ENCODE measurements at regions of chr14 and their contacts with region 1.

Region 1: GRCh38 chr14:92612988-92613658 is 99.5 kb downstream of the RIN3 start:
- DNase-seq: peak; percentile 55 to 83 (median 69)
- ATAC-seq: peak; percentile 35
- H3K4me3 ChIP-seq: no peak overlapping the region
- H3K4me3 Mint-ChIP-seq: peak overlapping the region; percentile 4
- H3K27ac ChIP-seq: no peak overlapping the region
- H3K27ac Mint-ChIP-seq: peak overlapping the region; percentile 67
- H3K4me1 ChIP-seq: peaks cover 56% of the 10 kb centered on the region
- H3K4me1 Mint-ChIP-seq: peaks cover 76% of the 10 kb centered on the region
- H3K27me3 ChIP-seq: no peaks in the 10 kb centered on the region
- H3K27me3 Mint-ChIP-seq: no peaks in the 10 kb centered on the region
- CTCF ChIP-seq: peak; percentile 96

Region 2: DNA sequence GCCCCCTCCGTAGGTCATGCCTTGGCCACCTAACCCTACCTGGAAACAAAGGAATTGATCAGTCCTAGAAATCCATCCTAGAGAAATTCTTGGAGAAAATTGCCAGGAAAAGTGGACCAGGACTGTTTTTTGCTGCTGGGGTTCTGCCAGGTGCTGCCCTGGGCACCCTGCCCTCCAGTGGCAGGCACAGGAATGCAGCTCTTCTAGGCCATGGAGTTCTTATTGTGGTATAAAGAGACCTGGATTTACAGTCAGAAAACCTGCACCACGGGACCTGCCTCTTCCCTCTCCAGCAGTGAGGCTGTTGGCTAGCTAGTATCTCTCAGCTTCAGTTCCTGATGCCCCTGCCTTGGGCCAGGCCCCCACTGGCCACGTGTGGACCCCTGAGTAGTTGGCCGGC is 230.4 kb before region 1 on chr14:
- CTCF ChIA-PET with region 1: no interaction called
- POLR2A ChIA-PET with region 1: no interaction called
- intact Hi-C with region 1: no loop called
- DNase-seq: no peak
- ATAC-seq: no peak
- H3K4me3 ChIP-seq: no peak overlapping the region
- H3K4me3 Mint-ChIP-seq: no peak overlapping the region
- H3K27ac ChIP-seq: no peak overlapping the region
- H3K27ac Mint-ChIP-seq: no peak overlapping the region
- H3K4me1 ChIP-seq: no peaks in the 10 kb centered on the region
- H3K4me1 Mint-ChIP-seq: no peaks in the 10 kb centered on the region
- H3K27me3 ChIP-seq: no peaks in the 10 kb centered on the region
- H3K27me3 Mint-ChIP-seq: no peaks in the 10 kb centered on the region
- CTCF ChIP-seq: no peak

Region 3: GRCh38 chr14:92659765-92660561 is 46.8 kb after region 1 on chr14:
- CTCF ChIA-PET with region 1: interaction called, 19 read pairs
- POLR2A ChIA-PET with region 1: interaction called, 154 read pairs
- intact Hi-C with region 1: no loop called
- DNase-seq: peak in 3 of 14 experiments; percentile 33 to 60 (median 53)
- ATAC-seq: no peak
- H3K4me3 ChIP-seq: no peak overlapping the region
- H3K4me3 Mint-ChIP-seq: peak overlapping the region; percentile 55
- H3K27ac ChIP-seq: peak overlapping the region; percentile 24 to 59
- H3K27ac Mint-ChIP-seq: peak overlapping the region; percentile 97
- H3K4me1 ChIP-seq: peaks cover 86% of the 10 kb centered on the region
- H3K4me1 Mint-ChIP-seq: peaks cover 96% of the 10 kb centered on the region
- H3K27me3 ChIP-seq: no peaks in the 10 kb centered on the region
- H3K27me3 Mint-ChIP-seq: no peaks in the 10 kb centered on the region
- CTCF ChIP-seq: no peak

Region 4: DNA sequence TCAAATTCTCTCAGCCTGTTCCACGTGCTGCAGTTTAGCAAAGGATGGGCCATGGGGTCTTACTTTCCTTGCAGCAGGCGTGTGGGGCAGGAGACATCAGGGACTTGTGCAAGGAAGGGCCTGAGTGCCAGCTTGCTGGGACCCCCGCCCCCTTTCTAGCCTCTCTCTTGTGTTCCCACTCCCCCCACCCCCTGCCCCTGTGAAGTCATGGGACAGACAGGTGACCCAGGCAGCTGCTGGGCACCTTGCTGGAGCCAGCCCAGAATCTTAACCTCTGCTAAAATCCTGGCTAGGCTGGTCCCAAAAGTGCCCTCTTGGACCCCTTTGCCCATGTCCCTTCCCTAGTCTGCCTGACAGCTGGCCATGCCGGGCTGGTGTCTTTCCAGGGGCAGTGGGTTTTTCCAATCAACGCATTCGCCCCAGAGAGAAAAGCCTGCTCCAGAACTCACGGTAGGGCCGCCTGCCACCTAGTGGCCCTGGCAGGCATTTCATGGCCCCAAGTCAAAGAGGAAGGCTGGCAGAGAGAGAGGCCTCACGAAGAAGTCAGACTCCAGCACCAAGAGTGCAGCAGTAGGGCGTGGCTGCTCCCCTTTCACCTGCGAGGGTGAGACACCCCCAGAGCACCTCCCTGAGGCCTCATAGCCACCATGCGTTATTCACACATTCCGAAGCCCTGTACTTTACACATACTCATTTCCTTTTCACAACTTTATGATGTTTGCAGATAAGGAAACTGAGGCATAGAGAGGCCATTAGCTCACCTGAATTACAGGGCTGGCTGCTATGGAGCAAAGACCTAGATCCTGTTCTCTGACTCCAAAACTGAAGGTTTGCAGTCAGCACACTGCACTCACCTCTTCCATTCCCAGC is 67.9 kb after region 1 on chr14:
- CTCF ChIA-PET with region 1: interaction called, 15 read pairs
- POLR2A ChIA-PET with region 1: interaction called, 4 read pairs
- intact Hi-C with region 1: loop called (anchors 1 kb)
- DNase-seq: peak; percentile 56 to 88 (median 72)
- ATAC-seq: peak; percentile 84
- H3K4me3 ChIP-seq: no peak overlapping the region
- H3K4me3 Mint-ChIP-seq: no peak overlapping the region
- H3K27ac ChIP-seq: peak overlapping the region in 1 of 2 donors; percentile 4
- H3K27ac Mint-ChIP-seq: peak overlapping the region; percentile 86
- H3K4me1 ChIP-seq: peaks cover 33% of the 10 kb centered on the region
- H3K4me1 Mint-ChIP-seq: peaks cover 25% of the 10 kb centered on the region
- H3K27me3 ChIP-seq: no peaks in the 10 kb centered on the region
- H3K27me3 Mint-ChIP-seq: no peaks in the 10 kb centered on the region
- CTCF ChIP-seq: peak; percentile 94

Region 5: DNA sequence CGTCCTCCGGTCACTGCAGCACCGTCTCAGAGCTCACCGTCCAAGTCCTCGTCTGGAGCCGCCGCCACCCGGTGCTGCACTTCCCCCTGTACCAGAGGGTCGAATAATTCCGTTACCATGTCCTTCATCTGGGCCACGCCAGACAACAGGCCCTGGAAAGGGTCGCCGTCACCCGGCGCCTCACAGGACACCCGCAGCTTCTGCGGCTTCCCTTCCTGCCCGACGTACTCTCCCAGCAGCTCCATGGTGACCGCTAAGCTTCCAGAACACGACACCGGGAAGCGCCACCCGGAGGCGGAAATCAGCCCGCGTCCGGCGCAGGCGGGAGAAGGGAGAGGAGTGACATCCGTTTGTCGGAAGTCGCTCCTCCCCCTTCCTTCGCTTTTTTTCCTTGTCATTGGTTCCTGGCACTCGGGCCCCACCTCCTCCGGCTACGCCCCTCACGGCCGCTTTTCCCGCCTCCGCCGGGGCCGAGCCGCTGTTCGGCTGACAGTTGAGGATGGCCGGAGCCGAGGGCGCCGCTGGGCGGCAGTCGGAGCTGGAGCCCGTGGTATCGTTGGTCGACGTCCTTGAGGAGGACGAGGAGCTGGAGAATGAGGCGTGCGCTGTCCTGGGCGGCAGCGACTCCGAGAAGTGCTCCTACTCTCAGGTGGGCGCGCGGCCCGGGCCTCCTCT is 593.8 kb after region 1 on chr14 and contains the starts of genes GON7 and UBR7:
- CTCF ChIA-PET with region 1: no interaction called
- POLR2A ChIA-PET with region 1: no interaction called
- intact Hi-C with region 1: no loop called
- DNase-seq: peak; percentile 68 to 95 (median 82)
- ATAC-seq: peak; percentile 97
- H3K4me3 ChIP-seq: peak within 1 kb of the TSS; percentile 93
- H3K4me3 Mint-ChIP-seq: peak within 1 kb of the TSS; percentile 97
- H3K27ac ChIP-seq: peak within 1 kb of the TSS; percentile 56 to 75
- H3K27ac Mint-ChIP-seq: peak within 1 kb of the TSS; percentile 95
- H3K4me1 ChIP-seq: peaks cover 32% of the 10 kb centered on the region
- H3K4me1 Mint-ChIP-seq: peaks cover 52% of the 10 kb centered on the region
- H3K27me3 ChIP-seq: no peaks in the 10 kb centered on the region
- H3K27me3 Mint-ChIP-seq: no peaks in the 10 kb centered on the region
- CTCF ChIP-seq: peak; percentile 21
- total RNA-seq, gene GON7: 2.3 to 2.4 TPM
- total RNA-seq, gene UBR7: 6.8 to 7.4 TPM